Activated CD4-positive, alpha-beta T cell treated with anti-CD3 and anti-CD28 coated beads, Interleukin-2, amount 10 ng/mL, durations not matched to agents 24 days and 14 days (primary cell): ENCODE measurements at regions of chr16 and their contacts with region 1.

Region 1: DNA sequence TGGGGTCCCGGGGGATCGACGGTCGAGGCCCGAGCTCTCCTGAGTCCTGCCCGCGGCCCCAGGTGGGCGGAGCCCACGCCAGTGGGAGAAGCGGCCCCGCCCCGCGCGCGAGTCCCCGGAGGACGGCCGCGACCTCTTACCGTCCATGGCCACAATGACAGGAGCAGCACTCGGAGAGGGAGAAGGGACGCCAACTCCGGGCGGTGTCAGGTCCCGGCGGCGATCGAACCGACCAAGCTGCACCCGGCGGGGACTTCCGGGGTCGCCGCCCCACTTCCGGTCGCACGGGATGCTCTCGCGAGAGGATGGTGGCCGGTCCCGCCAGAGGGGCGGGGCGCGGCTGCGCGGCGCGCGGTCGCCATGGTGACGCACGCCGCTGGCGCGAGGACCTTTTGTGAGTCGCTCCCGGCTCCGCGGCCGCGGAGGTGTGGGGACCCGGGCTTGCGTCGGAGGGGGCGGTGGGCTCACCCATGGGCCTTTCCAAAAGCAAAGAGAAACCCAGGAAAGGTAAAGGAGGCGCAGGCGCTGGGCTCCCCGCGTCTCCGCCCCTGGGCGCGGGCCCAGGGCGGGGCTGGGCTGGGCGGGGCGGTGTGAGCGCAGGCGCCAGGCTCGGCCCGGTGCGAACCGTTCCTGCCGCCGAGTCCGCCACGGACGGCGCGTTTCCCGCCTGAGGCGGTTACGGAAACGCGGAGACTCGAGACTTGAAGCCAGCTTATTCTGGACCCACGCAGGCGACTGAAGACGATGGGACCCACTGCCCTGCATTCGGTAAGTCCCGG is at the starts of genes CHMP1A and SPATA33:
- DNase-seq: peak; percentile 98
- H3K4me3 Mint-ChIP-seq: peak within 1 kb of the TSS; percentile 97
- H3K27ac Mint-ChIP-seq: peak within 1 kb of the TSS; percentile 92
- H3K4me1 Mint-ChIP-seq: peaks cover 33% of the 10 kb centered on the region
- H3K27me3 Mint-ChIP-seq: no peaks in the 10 kb centered on the region
- total RNA-seq, gene CHMP1A: 83.7 and 84.3 TPM in 2 replicates
- total RNA-seq, gene SPATA33: 14.6 and 17.2 TPM in 2 replicates

Region 2: DNA sequence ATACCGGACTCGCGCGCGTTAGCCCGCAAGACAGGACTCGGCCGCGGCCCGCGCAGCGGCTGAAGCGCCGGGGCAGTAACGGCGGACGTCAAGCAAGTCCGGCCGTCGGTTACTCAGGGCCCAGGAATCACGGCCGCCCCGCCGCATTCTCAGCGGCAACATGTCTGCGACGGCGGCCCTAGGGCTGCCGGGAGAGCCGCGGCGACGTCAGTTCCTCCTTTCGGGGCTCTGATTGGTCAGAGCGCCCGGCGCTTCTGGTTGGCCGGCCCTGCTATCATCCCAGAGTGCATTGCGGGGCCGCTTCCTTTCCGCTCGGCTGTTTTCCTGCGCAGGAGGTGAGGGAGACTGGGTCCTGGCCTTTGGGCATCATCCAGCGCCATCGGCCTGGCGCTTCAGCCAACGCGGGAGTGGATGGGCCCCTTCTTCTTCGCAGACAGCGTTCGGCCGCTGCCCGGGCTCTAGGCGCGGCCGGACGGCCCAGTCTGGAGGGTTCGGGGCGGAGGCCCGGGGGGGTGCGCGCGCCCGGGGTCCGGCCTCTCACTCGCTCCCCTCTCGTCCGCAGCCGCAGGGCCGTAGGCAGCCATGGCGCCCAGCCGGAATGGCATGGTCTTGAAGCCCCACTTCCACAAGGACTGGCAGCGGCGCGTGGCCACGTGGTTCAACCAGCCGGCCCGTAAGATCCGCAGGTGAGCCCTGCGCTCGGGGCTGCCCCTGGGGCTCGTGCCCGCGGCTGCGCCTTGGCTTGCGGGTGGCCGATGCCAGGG is 97.1 kb before region 1 on chr16 and contains the start of gene RPL13:
- intact Hi-C with region 1: loop called (anchors 1 kb)
- DNase-seq: peak; percentile 98
- H3K4me3 Mint-ChIP-seq: peak within 1 kb of the TSS; percentile 94
- H3K27ac Mint-ChIP-seq: peak within 1 kb of the TSS; percentile 99
- H3K4me1 Mint-ChIP-seq: peaks cover 44% of the 10 kb centered on the region
- H3K27me3 Mint-ChIP-seq: no peaks in the 10 kb centered on the region
- total RNA-seq, gene RPL13: 2,234 and 2,296 TPM in 2 replicates

Region 3: DNA sequence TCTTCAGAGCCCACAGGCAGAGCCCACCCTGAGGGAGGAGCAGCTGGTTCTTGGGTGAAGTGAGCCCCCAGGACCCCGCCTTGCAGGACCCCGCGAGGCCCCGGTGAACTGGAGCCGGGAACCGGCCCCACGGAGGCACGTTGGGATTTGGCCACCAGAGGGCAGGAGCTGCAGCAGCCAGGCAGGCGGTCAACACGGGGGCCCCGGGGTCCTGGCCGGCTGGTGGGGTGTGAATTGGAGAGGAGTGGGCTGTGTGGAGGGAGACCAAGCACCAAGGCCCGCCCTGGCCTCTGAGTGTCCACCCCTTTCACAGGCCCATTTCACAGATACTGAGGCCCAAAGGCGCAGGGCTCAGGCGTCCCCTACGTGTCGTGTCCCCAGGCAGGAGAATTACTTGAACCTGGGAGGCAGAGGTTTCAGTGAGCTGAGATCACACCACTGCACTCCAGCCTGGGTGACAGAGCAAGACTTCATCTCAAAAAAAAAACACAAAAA is 42.0 kb before region 1 on chr16:
- intact Hi-C with region 1: no loop called
- DNase-seq: no peak
- H3K4me3 Mint-ChIP-seq: no peak overlapping the region
- H3K27ac Mint-ChIP-seq: no peak overlapping the region
- H3K4me1 Mint-ChIP-seq: peaks cover 7% of the 10 kb centered on the region
- H3K27me3 Mint-ChIP-seq: no peaks in the 10 kb centered on the region